ENCODE measurements at regions of chr13 and their contacts with region 1.

Region 1: GRCh38 chr13:20828539-20829364 is 55.0 kb upstream of the EEF1AKMT1 start:
- DNase-seq: peak; percentile 52 to 72 (median 65)
- H3K4me3 ChIP-seq: no peak overlapping the region
- H3K4me3 Mint-ChIP-seq: peak overlapping the region; percentile 4 to 78 (median 48)
- H3K27ac ChIP-seq: no peak overlapping the region
- H3K27ac Mint-ChIP-seq: peak overlapping the region; percentile 3 to 91 (median 83)
- H3K4me1 ChIP-seq: peaks cover 11% of the 10 kb centered on the region
- H3K4me1 Mint-ChIP-seq: peaks cover 6 to 14% (median 9%) of the 10 kb centered on the region in 4 donors
- H3K27me3 ChIP-seq: no peaks in the 10 kb centered on the region
- H3K27me3 Mint-ChIP-seq: no peaks in the 10 kb centered on the region

Region 2: GRCh38 chr13:20197361-20197834 is 631.4 kb before region 1 on chr13:
- CTCF ChIA-PET with region 1: interaction called, 12 read pairs
- POLR2A ChIA-PET with region 1: no interaction called
- intact Hi-C with region 1: loop called (anchors 1 kb)
- DNase-seq: peak in 4 of 5 donors; percentile 42 to 52 (median 49)
- H3K4me3 ChIP-seq: no peak overlapping the region
- H3K4me3 Mint-ChIP-seq: no peak overlapping the region
- H3K27ac ChIP-seq: no peak overlapping the region
- H3K27ac Mint-ChIP-seq: peak overlapping the region in 1 of 7 donors; percentile 2
- H3K4me1 ChIP-seq: peaks cover 22% of the 10 kb centered on the region
- H3K4me1 Mint-ChIP-seq: peaks cover 14 to 21% (median 16%) of the 10 kb centered on the region in 4 donors
- H3K27me3 ChIP-seq: peaks cover 41% of the 10 kb centered on the region
- H3K27me3 Mint-ChIP-seq: peaks cover 34 to 36% of the 10 kb centered on the region in 2 donors

Region 3: GRCh38 chr13:20616059-20616797 is 212.5 kb before region 1 on chr13:
- CTCF ChIA-PET with region 1: no interaction called
- POLR2A ChIA-PET with region 1: no interaction called
- intact Hi-C with region 1: no loop called
- DNase-seq: no peak
- H3K4me3 ChIP-seq: no peak overlapping the region
- H3K4me3 Mint-ChIP-seq: no peak overlapping the region
- H3K27ac ChIP-seq: no peak overlapping the region
- H3K27ac Mint-ChIP-seq: no peak overlapping the region
- H3K4me1 ChIP-seq: no peaks in the 10 kb centered on the region
- H3K4me1 Mint-ChIP-seq: no peaks in the 10 kb centered on the region
- H3K27me3 ChIP-seq: no peaks in the 10 kb centered on the region
- H3K27me3 Mint-ChIP-seq: no peaks in the 10 kb centered on the region

Region 4: GRCh38 chr13:20713751-20714150 is 115.0 kb before region 1 on chr13:
- CTCF ChIA-PET with region 1: interaction called, 68 read pairs
- POLR2A ChIA-PET with region 1: no interaction called
- intact Hi-C with region 1: loop called (anchors 1 kb)
- DNase-seq: no peak
- H3K4me3 ChIP-seq: no peak overlapping the region
- H3K4me3 Mint-ChIP-seq: no peak overlapping the region
- H3K27ac ChIP-seq: no peak overlapping the region
- H3K27ac Mint-ChIP-seq: no peak overlapping the region
- H3K4me1 ChIP-seq: peaks cover 6% of the 10 kb centered on the region
- H3K4me1 Mint-ChIP-seq: peaks cover 4 to 10% (median 7%) of the 10 kb centered on the region in 4 donors
- H3K27me3 ChIP-seq: no peaks in the 10 kb centered on the region
- H3K27me3 Mint-ChIP-seq: peaks cover 3 to 12% of the 10 kb centered on the region in 2 donors

Region 5: DNA sequence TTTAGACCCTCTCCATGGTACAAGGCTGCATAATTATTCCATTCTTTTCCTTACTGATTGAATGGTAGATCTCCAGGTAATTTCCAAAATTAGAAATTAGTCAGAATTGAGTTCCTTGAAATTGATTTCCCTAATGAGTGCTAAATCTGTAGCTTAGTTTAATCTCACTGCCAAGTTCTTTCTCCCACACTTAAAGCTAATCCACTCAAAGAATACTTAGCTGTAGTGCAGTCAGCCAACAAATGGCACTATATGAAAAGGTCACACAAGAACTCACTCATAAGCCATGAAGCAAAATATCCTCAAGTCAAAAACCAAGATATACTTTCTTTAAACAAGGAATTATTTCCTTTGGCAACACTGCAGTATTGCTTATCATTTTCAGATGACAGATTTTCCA is 11.8 kb after region 1 on chr13:
- CTCF ChIA-PET with region 1: interaction called, 21 read pairs
- POLR2A ChIA-PET with region 1: no interaction called
- intact Hi-C with region 1: no loop called
- DNase-seq: no peak
- H3K4me3 ChIP-seq: no peak overlapping the region
- H3K4me3 Mint-ChIP-seq: no peak overlapping the region
- H3K27ac ChIP-seq: no peak overlapping the region
- H3K27ac Mint-ChIP-seq: peak overlapping the region in 1 of 7 donors; percentile 69
- H3K4me1 ChIP-seq: no peaks in the 10 kb centered on the region
- H3K4me1 Mint-ChIP-seq: peaks cover 0 to 5% (median 4%) of the 10 kb centered on the region in 4 donors
- H3K27me3 ChIP-seq: no peaks in the 10 kb centered on the region
- H3K27me3 Mint-ChIP-seq: no peaks in the 10 kb centered on the region

Region 6: DNA sequence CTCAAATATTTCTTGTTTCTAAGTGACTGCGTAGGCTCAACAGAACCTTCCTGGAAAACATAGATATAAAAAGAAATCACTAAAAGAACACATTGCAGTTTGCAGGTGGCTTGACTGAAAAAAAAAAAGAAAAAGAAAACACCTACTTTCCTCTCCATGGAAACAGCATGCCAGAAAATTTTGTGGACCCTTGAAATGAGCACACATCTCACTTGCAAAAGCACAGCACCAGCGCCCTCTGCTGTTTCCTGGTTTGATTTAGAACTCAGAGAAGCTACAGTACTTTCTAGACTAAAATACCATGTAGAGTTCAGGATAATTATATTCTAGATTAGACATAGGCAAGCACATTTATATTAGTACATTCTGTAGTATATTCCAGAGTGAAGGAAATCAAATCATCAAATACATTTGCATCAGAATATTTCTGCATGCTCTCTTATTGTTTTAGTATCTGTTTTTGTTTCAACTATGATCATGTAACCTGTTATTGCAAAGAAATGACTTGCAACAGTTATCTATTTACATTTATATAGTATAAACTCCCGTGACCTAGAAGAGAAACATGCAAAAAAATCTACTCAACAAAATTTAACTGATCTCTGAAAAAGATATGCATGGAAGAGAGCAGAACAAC is 96.1 kb after region 1 on chr13:
- CTCF ChIA-PET with region 1: interaction called, 11 read pairs
- POLR2A ChIA-PET with region 1: interaction called, 4 read pairs
- intact Hi-C with region 1: loop called (anchors 1 kb)
- DNase-seq: peak; percentile 55 to 71 (median 63)
- H3K4me3 ChIP-seq: no peak overlapping the region
- H3K4me3 Mint-ChIP-seq: no peak overlapping the region
- H3K27ac ChIP-seq: no peak overlapping the region
- H3K27ac Mint-ChIP-seq: no peak overlapping the region
- H3K4me1 ChIP-seq: no peaks in the 10 kb centered on the region
- H3K4me1 Mint-ChIP-seq: no peaks in the 10 kb centered on the region
- H3K27me3 ChIP-seq: no peaks in the 10 kb centered on the region
- H3K27me3 Mint-ChIP-seq: no peaks in the 10 kb centered on the region